Activated naive CD4-positive, alpha-beta T cell treated with anti-CD3 and anti-CD28 coated beads, Interleukin-2, amount 10 ng/mL, durations not matched to agents 7 days and 5 days (primary cell): ENCODE measurements at regions of chr3 and their contacts with region 1.

Region 1: GRCh38 chr3:10223676-10224639 is 24.3 kb upstream of the TATDN2 start:
- DNase-seq: peak; percentile 64
- H3K4me3 Mint-ChIP-seq: no peak overlapping the region
- H3K27ac Mint-ChIP-seq: peak overlapping the region; percentile 50
- H3K4me1 Mint-ChIP-seq: peaks cover 84% of the 10 kb centered on the region
- H3K27me3 Mint-ChIP-seq: no peaks in the 10 kb centered on the region

Region 2: DNA sequence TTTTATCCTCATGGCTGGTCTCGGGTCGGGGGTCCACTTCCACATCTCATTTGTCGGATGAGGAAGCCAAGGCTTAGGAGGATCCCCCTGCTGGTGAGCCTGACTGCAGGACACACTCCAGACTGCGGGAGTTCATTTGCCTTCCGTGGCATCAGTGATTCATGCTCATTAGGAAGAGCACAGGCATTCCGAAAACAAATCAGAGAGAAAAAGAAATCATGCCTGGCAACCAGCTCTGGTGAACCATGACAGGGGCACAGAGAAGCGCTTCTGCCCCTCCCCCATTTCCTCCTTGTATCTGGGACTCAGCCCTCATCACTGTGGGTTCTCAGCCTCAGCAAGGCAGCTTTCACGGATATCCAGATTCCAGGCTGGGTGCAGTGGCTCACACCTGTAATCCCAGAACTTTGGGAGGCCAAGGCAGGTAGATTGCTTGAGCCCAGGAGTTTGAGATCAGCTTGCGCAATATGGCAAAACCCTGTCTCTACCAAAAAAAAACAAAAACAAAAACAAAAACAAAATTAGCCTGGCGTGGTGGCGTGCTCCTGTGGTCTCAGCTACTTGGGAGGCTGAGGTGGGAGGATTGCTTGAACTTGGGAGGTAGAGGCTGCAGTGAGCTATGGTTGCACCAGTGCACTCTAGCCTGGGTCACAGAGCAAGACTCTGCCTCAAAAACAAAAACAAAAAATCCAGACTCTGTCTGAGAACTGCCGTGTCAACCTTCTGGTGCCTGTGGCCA is 30.8 kb before region 1 on chr3:
- CTCF ChIA-PET with region 1: interaction called, 14 read pairs
- DNase-seq: peak; percentile 77
- H3K4me3 Mint-ChIP-seq: peak overlapping the region; percentile 37
- H3K27ac Mint-ChIP-seq: peak overlapping the region; percentile 99
- H3K4me1 Mint-ChIP-seq: peaks cover 91% of the 10 kb centered on the region
- H3K27me3 Mint-ChIP-seq: no peaks in the 10 kb centered on the region

Region 3: GRCh38 chr3:10198761-10199649 is 25.0 kb before region 1 on chr3:
- CTCF ChIA-PET with region 1: interaction called, 10 read pairs
- DNase-seq: peak; percentile 87
- H3K4me3 Mint-ChIP-seq: peak overlapping the region; percentile 11
- H3K27ac Mint-ChIP-seq: peak overlapping the region; percentile 95
- H3K4me1 Mint-ChIP-seq: peaks cover 93% of the 10 kb centered on the region
- H3K27me3 Mint-ChIP-seq: no peaks in the 10 kb centered on the region

Region 4: GRCh38 chr3:10408680-10409079 is 184.7 kb after region 1 on chr3:
- CTCF ChIA-PET with region 1: no interaction called
- DNase-seq: no peak
- H3K4me3 Mint-ChIP-seq: no peak overlapping the region
- H3K27ac Mint-ChIP-seq: no peak overlapping the region
- H3K4me1 Mint-ChIP-seq: no peaks in the 10 kb centered on the region
- H3K27me3 Mint-ChIP-seq: peaks cover 7% of the 10 kb centered on the region